Mammary epithelial cell (primary cell): ENCODE measurements at regions of chr18 and their contacts with region 1.

Region 1: GRCh38 chr18:74652392-74652988 is 54.8 kb downstream of the ZNF407 start:
- DNase-seq: peak; percentile 19
- H3K4me3 ChIP-seq: no peak overlapping the region
- H3K27ac ChIP-seq: no peak overlapping the region
- H3K4me1 ChIP-seq: no peaks in the 10 kb centered on the region
- H3K27me3 ChIP-seq: no peaks in the 10 kb centered on the region
- CTCF ChIP-seq: peak; percentile 44 to 59

Region 2: DNA sequence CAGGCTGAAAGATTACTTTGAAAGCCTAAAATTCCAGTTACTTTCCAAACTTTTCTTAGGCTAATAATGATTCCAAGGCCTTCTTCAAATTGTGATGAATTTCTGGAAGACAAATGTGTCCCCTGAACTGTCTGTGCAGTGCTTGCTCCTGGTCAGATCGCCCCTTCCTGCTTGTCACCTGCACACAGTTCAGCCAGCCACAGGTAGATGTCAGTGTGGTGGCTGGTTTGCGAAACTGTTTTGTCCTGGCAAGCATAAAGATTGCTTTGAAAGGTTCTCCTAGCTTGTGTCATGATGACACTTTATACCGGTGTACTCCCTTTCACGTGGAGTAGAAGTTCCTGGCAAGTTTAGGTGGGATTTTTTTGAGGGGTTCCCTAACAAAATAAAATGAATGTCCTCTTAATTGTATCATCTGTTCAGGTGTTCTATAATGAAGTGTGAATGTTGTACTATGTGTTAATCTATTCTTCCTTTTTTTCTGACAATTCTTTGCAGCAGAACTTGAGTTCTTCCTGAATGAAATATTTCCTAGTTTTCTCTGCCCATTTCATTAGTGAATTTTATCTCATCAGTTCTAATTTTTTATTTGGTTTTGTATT is 244.0 kb after region 1 on chr18:
- CTCF ChIA-PET with region 1: no interaction called
- dilution Hi-C with region 1: no loop called
- in situ Hi-C with region 1: no loop called
- intact Hi-C with region 1: loop called (anchors 10 kb)
- DNase-seq: peak; percentile 62
- H3K4me3 ChIP-seq: no peak overlapping the region
- H3K27ac ChIP-seq: no peak overlapping the region
- H3K4me1 ChIP-seq: peaks cover 6% of the 10 kb centered on the region
- H3K27me3 ChIP-seq: no peaks in the 10 kb centered on the region
- CTCF ChIP-seq: peak; percentile 83 to 89

Region 3: GRCh38 chr18:75041586-75041985 is 389.1 kb after region 1 on chr18:
- CTCF ChIA-PET with region 1: interaction called, 4 read pairs
- dilution Hi-C with region 1: no loop called
- in situ Hi-C with region 1: no loop called
- intact Hi-C with region 1: loop called (anchors 2 kb)
- DNase-seq: peak; percentile 2
- H3K4me3 ChIP-seq: no peak overlapping the region
- H3K27ac ChIP-seq: no peak overlapping the region
- H3K4me1 ChIP-seq: no peaks in the 10 kb centered on the region
- H3K27me3 ChIP-seq: no peaks in the 10 kb centered on the region
- CTCF ChIP-seq: peak; percentile 43 to 46

Region 4: GRCh38 chr18:75247611-75248421 is 595.3 kb after region 1 on chr18:
- CTCF ChIA-PET with region 1: no interaction called
- dilution Hi-C with region 1: no loop called
- in situ Hi-C with region 1: loop called in 1 of 2 experiments (anchors 10 kb)
- intact Hi-C with region 1: loop called (anchors 1 kb)
- DNase-seq: peak; percentile 54
- H3K4me3 ChIP-seq: peak overlapping the region; percentile 53 to 59 (median 56)
- H3K27ac ChIP-seq: peak overlapping the region; percentile 68
- H3K4me1 ChIP-seq: peaks cover 32% of the 10 kb centered on the region
- H3K27me3 ChIP-seq: no peaks in the 10 kb centered on the region
- CTCF ChIP-seq: no peak

Region 5: DNA sequence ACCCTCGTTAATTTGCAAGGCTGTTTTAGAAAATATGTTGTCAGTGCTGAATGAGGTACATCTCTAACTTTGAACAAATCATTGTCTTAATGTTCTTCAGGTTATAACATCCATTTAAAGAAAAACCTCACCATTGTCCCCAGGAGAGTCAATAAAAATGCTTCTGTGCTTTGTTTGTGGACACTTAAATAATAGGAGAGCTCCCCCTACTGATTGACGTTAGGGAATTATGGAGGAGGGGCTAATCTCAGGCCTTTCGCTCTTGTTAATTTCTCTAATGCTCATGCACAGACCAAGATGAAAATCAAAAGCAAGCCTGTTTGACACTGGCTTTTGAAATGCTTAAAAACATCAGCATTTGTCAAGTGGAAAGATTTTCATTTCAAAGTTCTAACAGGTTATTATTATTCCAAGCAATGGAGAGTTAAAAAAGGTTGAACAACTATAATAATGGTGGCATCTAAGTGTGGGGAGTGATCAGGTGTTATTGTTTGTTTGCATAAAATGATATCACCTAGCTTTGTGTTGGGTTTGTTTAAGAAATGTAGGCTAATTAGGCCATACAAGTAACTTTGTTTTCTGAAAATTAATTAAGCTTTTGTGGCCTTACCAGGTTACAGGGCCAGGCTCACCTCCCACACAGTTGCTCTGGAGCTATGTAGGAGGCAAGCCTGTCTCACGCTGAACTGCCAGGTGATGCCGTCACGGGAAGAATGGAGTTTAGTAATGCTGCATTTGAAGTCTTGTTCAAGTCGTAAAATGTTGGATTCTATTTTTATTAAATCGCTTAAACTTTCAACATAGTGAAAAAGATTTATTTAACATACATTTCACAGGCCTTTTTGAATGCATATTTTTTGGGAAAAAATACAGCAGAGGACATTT is 826.7 kb after region 1 on chr18:
- CTCF ChIA-PET with region 1: no interaction called
- dilution Hi-C with region 1: no loop called
- in situ Hi-C with region 1: loop called in 1 of 2 experiments (anchors 25 kb)
- intact Hi-C with region 1: loop called (anchors 2 kb)
- DNase-seq: peak; percentile 40
- H3K4me3 ChIP-seq: no peak overlapping the region
- H3K27ac ChIP-seq: no peak overlapping the region
- H3K4me1 ChIP-seq: peaks cover 5% of the 10 kb centered on the region
- H3K27me3 ChIP-seq: no peaks in the 10 kb centered on the region
- CTCF ChIP-seq: peak; percentile 47 to 65

Region 6: GRCh38 chr18:76259096-76259495 is 1606.6 kb after region 1 on chr18:
- CTCF ChIA-PET with region 1: no interaction called
- dilution Hi-C with region 1: no loop called
- in situ Hi-C with region 1: no loop called
- intact Hi-C with region 1: loop called (anchors 5 kb)
- DNase-seq: no peak
- H3K4me3 ChIP-seq: no peak overlapping the region
- H3K27ac ChIP-seq: no peak overlapping the region
- H3K4me1 ChIP-seq: peaks cover 9% of the 10 kb centered on the region
- H3K27me3 ChIP-seq: no peaks in the 10 kb centered on the region
- CTCF ChIP-seq: no peak